Heart left ventricle (tissue), 16 donors: ENCODE measurements at regions of chr17 and their contacts with region 1.

Region 1: GRCh38 chr17:59619293-59620063 is at the start of gene CLTC:
- DNase-seq: peak; percentile 93 to 96 (median 95)
- ATAC-seq: peak; percentile 91 to 95 (median 94)
- H3K4me3 ChIP-seq: peak within 1 kb of the TSS; percentile 68 to 97 (median 84)
- H3K27ac ChIP-seq: peak within 1 kb of the TSS; percentile 93 to 100 (median 99)
- H3K4me1 ChIP-seq: peaks cover 8 to 51% (median 42%) of the 10 kb centered on the region in 12 donors
- H3K27me3 ChIP-seq: no peaks in the 10 kb centered on the region
- CTCF ChIP-seq: no peak
- POLR2A ChIP-seq: peak; percentile 69 to 78
- total RNA-seq, gene CLTC: 144 to 242 (median 193) TPM

Region 2: GRCh38 chr17:59521204-59522126 is 98.0 kb before region 1 on chr17:
- intact Hi-C with region 1: no loop called
- DNase-seq: peak in 4 of 5 donors; percentile 34 to 46 (median 40)
- ATAC-seq: peak in 3 of 4 donors; percentile 61 to 80 (median 72)
- H3K4me3 ChIP-seq: no peak overlapping the region
- H3K27ac ChIP-seq: no peak overlapping the region
- H3K4me1 ChIP-seq: peaks cover 0 to 19% (median 0%) of the 10 kb centered on the region in 12 donors
- H3K27me3 ChIP-seq: no peaks in the 10 kb centered on the region
- CTCF ChIP-seq: peak; percentile 75 to 89 (median 86)
- POLR2A ChIP-seq: no peak

Region 3: GRCh38 chr17:59565171-59565969 is 54.1 kb before region 1 on chr17 and contains the start of gene DHX40:
- intact Hi-C with region 1: loop called in 1 of 10 experiments (anchors 10 kb)
- DNase-seq: peak; percentile 94 to 96 (median 95)
- ATAC-seq: peak; percentile 97 to 99 (median 99)
- H3K4me3 ChIP-seq: peak within 1 kb of the TSS; percentile 57 to 98 (median 87)
- H3K27ac ChIP-seq: peak within 1 kb of the TSS; percentile 51 to 87 (median 80)
- H3K4me1 ChIP-seq: peaks cover 0 to 16% (median 9%) of the 10 kb centered on the region in 12 donors
- H3K27me3 ChIP-seq: no peaks in the 10 kb centered on the region
- CTCF ChIP-seq: peak in 1 of 12 donors; percentile 5
- POLR2A ChIP-seq: peak in 1 of 2 donors; percentile 41
- total RNA-seq, gene DHX40: 15.5 to 25.4 (median 21.2) TPM

Region 4: GRCh38 chr17:59668816-59669215 is 49.3 kb after region 1 on chr17:
- intact Hi-C with region 1: no loop called
- DNase-seq: no peak
- ATAC-seq: peak in 3 of 4 donors; percentile 11 to 49 (median 39)
- H3K4me3 ChIP-seq: no peak overlapping the region
- H3K27ac ChIP-seq: peak overlapping the region in 2 of 12 donors; percentile 48 to 72
- H3K4me1 ChIP-seq: peaks cover 0 to 51% (median 5%) of the 10 kb centered on the region in 12 donors
- H3K27me3 ChIP-seq: no peaks in the 10 kb centered on the region
- CTCF ChIP-seq: no peak
- POLR2A ChIP-seq: no peak

Region 5: GRCh38 chr17:59707114-59707970 is 87.9 kb after region 1 on chr17 and contains the starts of genes PTRH2 and VMP1:
- intact Hi-C with region 1: loop called in 1 of 10 experiments (anchors 5 kb)
- DNase-seq: peak; percentile 97 to 99 (median 98)
- ATAC-seq: peak; percentile 99 to 100 (median 99)
- H3K4me3 ChIP-seq: peak within 1 kb of the TSS; percentile 50 to 93 (median 79)
- H3K27ac ChIP-seq: peak within 1 kb of the TSS; percentile 63 to 96 (median 91)
- H3K4me1 ChIP-seq: peaks cover 4 to 75% (median 30%) of the 10 kb centered on the region in 12 donors
- H3K27me3 ChIP-seq: no peaks in the 10 kb centered on the region
- CTCF ChIP-seq: no peak
- POLR2A ChIP-seq: peak; percentile 63 to 80
- total RNA-seq, gene PTRH2: 6.7 to 20.1 (median 9.0) TPM
- total RNA-seq, gene VMP1: 36.1 to 181 (median 50.1) TPM

Region 6: GRCh38 chr17:60284709-60285108 is 665.2 kb after region 1 on chr17:
- intact Hi-C with region 1: no loop called
- DNase-seq: no peak
- ATAC-seq: no peak
- H3K4me3 ChIP-seq: no peak overlapping the region
- H3K27ac ChIP-seq: no peak overlapping the region
- H3K4me1 ChIP-seq: peaks cover 0 to 10% (median 0%) of the 10 kb centered on the region in 12 donors
- H3K27me3 ChIP-seq: no peaks in the 10 kb centered on the region
- CTCF ChIP-seq: no peak
- POLR2A ChIP-seq: no peak